MCF 10A (cell line): ENCODE measurements at regions of chr9 and their contacts with region 1.

Region 1: GRCh38 chr9:15552636-15553527 is at the start of gene CCDC171:
- DNase-seq: peak; percentile 95
- H3K4me3 Mint-ChIP-seq: peak within 1 kb of the TSS; percentile 88
- H3K27ac Mint-ChIP-seq: peak within 1 kb of the TSS; percentile 52
- H3K4me1 Mint-ChIP-seq: no peaks in the 10 kb centered on the region
- H3K27me3 Mint-ChIP-seq: no peaks in the 10 kb centered on the region
- CTCF ChIP-seq: no peak
- total RNA-seq, gene CCDC171: 1.7 and 1.8 TPM in 2 replicates

Region 2: DNA sequence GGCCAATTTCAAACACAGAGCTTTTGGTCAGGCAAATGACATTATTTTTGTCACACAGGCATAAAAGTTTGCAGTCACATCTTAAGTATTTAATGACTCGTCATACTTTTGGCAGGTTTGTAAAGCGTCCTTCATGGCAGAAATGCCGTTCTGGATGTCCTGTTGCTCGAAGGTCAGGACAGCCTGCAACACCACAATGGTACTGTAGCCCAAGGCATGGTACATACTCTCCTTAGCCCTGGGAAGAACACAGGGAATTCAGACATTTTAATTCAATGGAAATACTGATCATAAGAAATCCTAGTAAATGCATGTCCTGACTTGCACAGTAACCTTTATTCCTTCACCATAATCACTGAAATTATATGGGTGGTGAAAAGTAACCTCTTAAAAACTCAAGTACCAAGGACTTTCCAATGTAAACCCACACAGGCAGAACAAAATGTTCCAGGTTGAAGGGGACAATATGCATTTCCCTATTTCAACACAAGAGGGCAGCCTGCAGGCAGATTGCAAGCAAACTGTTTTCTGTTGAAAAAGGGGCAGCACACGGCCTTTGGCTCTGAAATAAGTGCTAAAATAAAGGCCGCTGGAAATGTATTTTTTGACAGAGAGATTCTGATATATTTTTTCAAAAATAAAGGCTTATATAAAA is 341.6 kb before region 1 on chr9:
- CTCF ChIA-PET with region 1: no interaction called
- POLR2A ChIA-PET with region 1: no interaction called
- intact Hi-C with region 1: no loop called
- DNase-seq: peak; percentile 70
- H3K4me3 Mint-ChIP-seq: no peak overlapping the region
- H3K27ac Mint-ChIP-seq: no peak overlapping the region
- H3K4me1 Mint-ChIP-seq: no peaks in the 10 kb centered on the region
- H3K27me3 Mint-ChIP-seq: no peaks in the 10 kb centered on the region
- CTCF ChIP-seq: peak; percentile 63

Region 3: DNA sequence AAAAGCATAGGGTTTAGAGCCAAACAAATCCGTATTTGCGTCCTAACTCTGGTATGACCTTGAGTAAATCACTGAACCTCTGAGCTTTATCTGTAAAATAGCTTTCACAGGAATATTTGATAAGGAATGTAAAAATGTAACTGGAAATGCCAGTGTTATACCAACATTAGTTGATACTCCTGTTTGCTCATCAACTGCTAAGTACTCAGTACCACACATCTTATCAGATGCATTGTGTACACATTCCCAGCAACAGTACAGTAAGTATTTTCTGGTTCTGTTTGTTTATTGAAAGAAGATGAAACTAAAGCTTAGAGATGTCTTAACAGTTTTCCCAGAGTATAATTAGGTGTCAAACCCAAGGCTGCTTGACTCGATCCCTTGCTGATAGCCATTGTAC is 108.7 kb before region 1 on chr9:
- CTCF ChIA-PET with region 1: no interaction called
- POLR2A ChIA-PET with region 1: no interaction called
- intact Hi-C with region 1: no loop called
- DNase-seq: no peak
- H3K4me3 Mint-ChIP-seq: no peak overlapping the region
- H3K27ac Mint-ChIP-seq: no peak overlapping the region
- H3K4me1 Mint-ChIP-seq: no peaks in the 10 kb centered on the region
- H3K27me3 Mint-ChIP-seq: no peaks in the 10 kb centered on the region
- CTCF ChIP-seq: no peak

Region 4: GRCh38 chr9:15510789-15511575 is 41.9 kb before region 1 on chr9 and contains the start of gene PSIP1:
- CTCF ChIA-PET with region 1: interaction called, 5 read pairs
- POLR2A ChIA-PET with region 1: interaction called, 52 read pairs
- intact Hi-C with region 1: loop called (anchors 2 kb)
- DNase-seq: peak; percentile 83
- H3K4me3 Mint-ChIP-seq: peak within 1 kb of the TSS; percentile 85
- H3K27ac Mint-ChIP-seq: peak within 1 kb of the TSS; percentile 100
- H3K4me1 Mint-ChIP-seq: peaks cover 34% of the 10 kb centered on the region
- H3K27me3 Mint-ChIP-seq: no peaks in the 10 kb centered on the region
- CTCF ChIP-seq: no peak
- total RNA-seq, gene PSIP1: 55.3 and 57.8 TPM in 2 replicates

Region 5: DNA sequence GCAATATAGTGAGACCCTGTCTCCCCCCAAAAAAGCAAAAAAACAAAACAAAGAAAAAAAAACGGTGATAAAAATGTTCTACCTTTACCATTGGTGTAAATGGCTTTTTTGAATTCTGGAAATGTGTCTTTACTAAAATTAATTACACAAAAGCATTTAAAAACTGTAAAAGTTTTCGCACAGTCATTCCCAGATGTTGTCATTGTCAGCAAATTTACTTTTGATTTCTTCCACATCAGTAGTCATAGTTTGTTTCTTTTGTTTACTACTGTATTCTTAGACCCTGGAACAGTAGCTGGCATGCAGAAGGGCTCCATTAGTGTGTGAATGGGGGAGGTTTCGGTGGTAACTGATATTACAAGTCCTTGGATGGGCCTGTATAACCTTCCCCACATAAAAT is 39.4 kb after region 1 on chr9:
- CTCF ChIA-PET with region 1: no interaction called
- POLR2A ChIA-PET with region 1: no interaction called
- intact Hi-C with region 1: no loop called
- DNase-seq: no peak
- H3K4me3 Mint-ChIP-seq: no peak overlapping the region
- H3K27ac Mint-ChIP-seq: no peak overlapping the region
- H3K4me1 Mint-ChIP-seq: no peaks in the 10 kb centered on the region
- H3K27me3 Mint-ChIP-seq: no peaks in the 10 kb centered on the region
- CTCF ChIP-seq: no peak

Region 6: DNA sequence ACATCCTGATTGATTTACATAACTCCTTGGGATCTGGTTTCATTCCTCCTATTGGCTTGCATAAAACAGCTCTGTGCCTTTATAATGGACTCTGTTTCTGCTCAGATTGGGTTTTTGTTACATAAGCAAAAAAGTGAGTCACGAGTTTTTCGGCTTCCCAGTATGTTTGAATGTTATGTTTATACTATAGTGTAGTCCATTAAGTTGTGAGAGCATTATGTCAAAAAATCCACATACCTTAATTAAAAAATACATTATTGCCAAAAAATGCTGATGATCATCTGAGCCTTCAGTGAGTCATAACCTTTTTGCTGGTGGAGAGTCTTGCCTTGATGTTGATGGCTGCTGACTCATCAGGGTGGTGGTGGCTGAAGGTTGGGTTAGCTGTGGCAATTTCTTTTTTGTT is 144.6 kb after region 1 on chr9:
- CTCF ChIA-PET with region 1: no interaction called
- POLR2A ChIA-PET with region 1: no interaction called
- intact Hi-C with region 1: no loop called
- DNase-seq: peak; percentile 86
- H3K4me3 Mint-ChIP-seq: no peak overlapping the region
- H3K27ac Mint-ChIP-seq: peak overlapping the region; percentile 81
- H3K4me1 Mint-ChIP-seq: peaks cover 17% of the 10 kb centered on the region
- H3K27me3 Mint-ChIP-seq: no peaks in the 10 kb centered on the region
- CTCF ChIP-seq: no peak

Region 7: DNA sequence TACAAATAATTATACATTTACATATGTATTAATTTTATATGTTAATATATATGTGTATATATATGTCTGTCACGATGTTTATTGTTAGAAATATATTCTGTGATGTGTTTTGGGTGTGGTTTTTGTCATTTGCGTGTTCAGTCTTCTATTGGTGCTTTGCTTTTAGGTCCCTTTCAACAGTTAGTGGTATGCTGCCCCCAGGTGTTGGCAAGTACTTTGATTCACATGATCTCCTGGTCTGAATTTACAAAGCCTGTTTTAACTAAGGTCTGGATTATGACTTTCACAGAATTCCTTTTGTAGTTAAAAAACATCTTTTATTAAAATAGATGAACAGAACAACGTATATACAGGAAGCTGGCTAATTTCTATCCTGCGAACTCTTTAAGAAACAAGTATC is 271.4 kb after region 1 on chr9:
- CTCF ChIA-PET with region 1: interaction called, 5 read pairs
- POLR2A ChIA-PET with region 1: no interaction called
- intact Hi-C with region 1: loop called (anchors 5 kb)
- DNase-seq: peak; percentile 71
- H3K4me3 Mint-ChIP-seq: no peak overlapping the region
- H3K27ac Mint-ChIP-seq: no peak overlapping the region
- H3K4me1 Mint-ChIP-seq: no peaks in the 10 kb centered on the region
- H3K27me3 Mint-ChIP-seq: no peaks in the 10 kb centered on the region
- CTCF ChIP-seq: peak; percentile 19